ENCODE measurements at regions of chr2 and their contacts with region 1.

Region 1: GRCh38 chr2:5290900-5291538 is 401.2 kb upstream of the SOX11 start:
- DNase-seq: peak; percentile 12
- H3K4me3 Mint-ChIP-seq: no peak overlapping the region
- H3K27ac Mint-ChIP-seq: no peak overlapping the region
- H3K4me1 Mint-ChIP-seq: peaks cover 6% of the 10 kb centered on the region
- H3K27me3 Mint-ChIP-seq: no peaks in the 10 kb centered on the region
- CTCF ChIP-seq: no peak

Region 2: DNA sequence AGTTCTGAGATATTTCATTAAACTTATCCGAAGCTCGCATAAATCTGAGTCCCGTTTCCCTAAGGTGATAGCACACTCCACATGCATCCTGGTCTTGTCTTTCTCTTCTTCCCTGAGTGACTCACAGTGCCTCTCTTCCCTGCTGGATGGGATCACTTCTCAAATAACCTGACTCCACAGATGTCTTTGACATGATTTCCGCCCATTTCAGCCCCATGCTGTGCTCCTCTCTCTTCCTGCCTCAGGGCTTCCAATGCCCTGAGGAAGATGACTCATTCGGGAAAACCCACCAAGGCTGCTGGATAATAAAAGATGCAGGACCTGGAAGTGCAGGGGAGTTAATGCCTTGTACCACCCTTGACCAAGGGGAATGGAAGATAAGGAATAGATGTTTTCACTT is 40.5 kb before region 1 on chr2:
- CTCF ChIA-PET with region 1: no interaction called
- POLR2A ChIA-PET with region 1: no interaction called
- intact Hi-C with region 1: no loop called
- DNase-seq: peak; percentile 20
- H3K4me3 Mint-ChIP-seq: no peak overlapping the region
- H3K27ac Mint-ChIP-seq: no peak overlapping the region
- H3K4me1 Mint-ChIP-seq: peaks cover 10% of the 10 kb centered on the region
- H3K27me3 Mint-ChIP-seq: no peaks in the 10 kb centered on the region
- CTCF ChIP-seq: no peak

Region 3: DNA sequence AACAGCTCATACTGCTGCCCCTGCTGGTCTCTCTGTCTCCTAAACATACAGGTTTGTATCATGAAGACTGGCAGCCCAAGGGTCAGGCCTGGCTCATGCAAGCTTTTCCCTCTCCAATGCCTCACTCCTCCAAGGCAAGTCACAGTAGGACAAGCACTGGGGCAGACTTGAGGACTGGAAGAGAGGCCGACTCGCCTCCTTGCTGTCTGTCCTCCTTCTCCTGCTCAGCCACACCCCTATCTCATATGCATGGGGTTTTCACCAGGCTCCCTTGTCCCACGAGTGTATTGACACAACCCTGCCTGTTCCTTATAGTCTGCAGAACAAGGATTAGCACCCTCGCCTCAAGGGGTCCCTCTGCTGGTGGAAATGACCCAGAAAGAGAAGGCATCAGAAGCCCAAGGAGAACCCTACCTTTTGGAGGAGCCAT is 624.9 kb after region 1 on chr2:
- CTCF ChIA-PET with region 1: interaction called, 3 read pairs
- POLR2A ChIA-PET with region 1: no interaction called
- intact Hi-C with region 1: loop called (anchors 10 kb)
- DNase-seq: peak; percentile 3
- H3K4me3 Mint-ChIP-seq: no peak overlapping the region
- H3K27ac Mint-ChIP-seq: no peak overlapping the region
- H3K4me1 Mint-ChIP-seq: peaks cover 24% of the 10 kb centered on the region
- H3K27me3 Mint-ChIP-seq: no peaks in the 10 kb centered on the region
- CTCF ChIP-seq: peak; percentile 37

Measured in MCF 10A (cell line).